Heart right ventricle (tissue), 16 donors: ENCODE measurements at regions of chr20 and their contacts with region 1.

Region 1: DNA sequence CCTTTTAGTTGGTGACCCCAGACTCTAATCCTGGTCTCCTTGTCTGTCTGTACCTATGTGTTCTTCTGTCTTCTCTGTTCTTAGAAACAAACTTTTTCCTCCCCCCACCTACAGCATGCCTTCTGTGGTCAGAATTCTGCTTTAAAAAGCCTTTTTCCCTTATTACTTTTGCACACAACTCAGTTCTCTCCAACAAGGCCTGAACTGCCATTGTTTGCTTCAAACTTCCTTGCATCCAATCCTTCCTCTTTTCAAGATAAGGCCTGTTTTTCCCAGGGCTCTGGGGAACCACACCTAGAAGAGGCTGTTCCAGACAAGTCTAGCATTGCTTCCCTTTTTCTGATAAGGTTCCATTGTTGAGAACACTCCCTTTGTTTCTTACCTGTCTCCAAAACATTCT is 22.2 kb upstream of the NCOA3 start:
- DNase-seq: peak in 1 of 2 donors; percentile 32
- ATAC-seq: peak; percentile 43 to 91 (median 84)
- H3K4me3 ChIP-seq: no peak overlapping the region
- H3K27ac ChIP-seq: peak overlapping the region; percentile 32 to 75 (median 60)
- H3K4me1 ChIP-seq: peaks cover 0 to 16% (median 9%) of the 10 kb centered on the region in 9 donors
- H3K27me3 ChIP-seq: no peaks in the 10 kb centered on the region
- CTCF ChIP-seq: no peak

Region 2: DNA sequence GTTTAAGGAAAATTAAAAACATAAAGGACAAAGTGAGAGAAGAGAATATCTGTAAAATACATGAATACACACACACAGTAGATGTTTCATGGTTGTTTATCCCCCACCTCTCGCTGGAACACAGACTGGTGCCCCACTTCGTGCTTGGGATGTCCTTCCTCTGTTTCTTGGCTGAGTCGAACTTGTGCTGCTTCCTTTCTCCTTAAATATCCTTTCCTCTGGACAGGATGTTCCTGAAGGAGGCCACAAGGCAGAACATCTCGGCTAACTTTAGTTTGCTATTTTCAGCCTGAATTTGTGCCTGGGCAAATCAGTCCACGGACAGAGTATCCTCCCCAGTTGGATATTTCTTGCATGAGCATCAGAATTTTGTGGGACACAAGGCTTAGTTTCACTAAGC is 68.3 kb before region 1 on chr20:
- intact Hi-C with region 1: loop called in 2 of 10 experiments (anchors 5 to 10 kb)
- DNase-seq: peak in 1 of 2 donors; percentile 27
- ATAC-seq: peak; percentile 30 to 90 (median 76)
- H3K4me3 ChIP-seq: peak overlapping the region in 1 of 10 donors; percentile 6
- H3K27ac ChIP-seq: peak overlapping the region; percentile 36 to 77 (median 61)
- H3K4me1 ChIP-seq: peaks cover 6 to 46% (median 33%) of the 10 kb centered on the region in 9 donors
- H3K27me3 ChIP-seq: no peaks in the 10 kb centered on the region
- CTCF ChIP-seq: no peak